Astrocyte of the cerebellum (primary cell): ENCODE measurements at regions of chr5 and their contacts with region 1.

Region 1: GRCh38 chr5:10627160-10627701 is 63.4 kb downstream of the ANKRD33B start:
- DNase-seq: no peak
- H3K4me3 ChIP-seq: peak overlapping the region; percentile 27
- CTCF ChIP-seq: no peak

Region 2: DNA sequence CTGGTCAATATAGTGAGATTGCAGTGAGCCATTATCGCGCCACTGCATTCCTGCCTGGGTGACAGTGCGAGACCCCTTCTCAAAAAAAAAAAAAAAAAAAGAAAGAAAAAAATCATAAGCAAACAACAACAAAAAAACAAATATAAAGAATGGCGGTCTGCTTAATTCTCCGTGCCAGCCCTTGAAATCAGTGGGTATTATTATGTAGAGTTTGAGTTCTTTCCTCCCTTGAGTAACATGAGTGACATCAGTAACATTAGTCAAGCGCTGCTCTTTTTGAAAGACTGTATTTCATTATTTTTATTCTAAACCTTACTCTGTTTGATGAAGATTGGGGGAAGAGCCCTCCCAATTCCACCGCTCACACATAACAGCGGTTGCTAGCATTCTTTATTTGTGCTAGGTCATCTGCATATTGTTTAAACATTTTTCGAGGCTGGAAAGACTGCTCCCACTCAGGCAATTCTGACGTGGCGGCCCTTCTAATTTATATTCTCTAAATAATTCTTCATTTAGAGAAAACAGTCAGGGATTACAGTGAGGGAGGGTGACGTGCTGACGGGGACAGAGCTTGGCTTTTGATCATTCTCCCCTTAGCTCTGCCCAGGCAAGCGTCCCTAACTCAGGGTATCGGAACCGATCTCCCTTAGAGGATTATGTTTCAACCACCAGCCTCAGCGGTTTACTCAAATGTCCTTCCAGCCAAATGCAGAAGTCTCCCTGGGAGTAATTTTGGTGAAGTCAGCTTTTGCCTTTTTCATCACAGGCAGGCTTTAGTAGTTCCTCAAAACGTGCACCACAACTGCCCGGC is 274.6 kb before region 1 on chr5:
- in situ Hi-C with region 1: no loop called
- DNase-seq: no peak
- H3K4me3 ChIP-seq: peak overlapping the region; percentile 86
- CTCF ChIP-seq: no peak

Region 3: DNA sequence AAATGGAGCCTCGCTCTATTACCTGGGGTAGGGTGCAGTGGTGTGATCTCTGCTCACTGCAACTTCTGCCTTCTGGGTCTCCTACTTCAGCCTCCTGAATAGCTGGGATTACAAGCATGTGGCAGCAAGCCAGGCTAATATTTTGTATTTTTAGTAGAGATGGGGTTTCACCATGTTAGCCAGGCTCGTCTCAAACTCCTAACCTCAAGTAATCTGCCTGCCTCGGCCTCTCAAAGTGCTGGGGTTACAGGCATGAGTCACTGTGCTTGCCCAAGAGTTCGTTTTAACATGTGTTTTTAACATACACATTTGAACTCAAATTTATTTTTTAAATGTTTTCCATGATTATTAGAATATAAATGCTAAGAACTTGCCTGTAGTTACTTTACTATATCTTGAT is 239.5 kb before region 1 on chr5:
- in situ Hi-C with region 1: loop called (anchors 10 kb)
- DNase-seq: no peak
- H3K4me3 ChIP-seq: no peak overlapping the region
- CTCF ChIP-seq: no peak

Region 4: DNA sequence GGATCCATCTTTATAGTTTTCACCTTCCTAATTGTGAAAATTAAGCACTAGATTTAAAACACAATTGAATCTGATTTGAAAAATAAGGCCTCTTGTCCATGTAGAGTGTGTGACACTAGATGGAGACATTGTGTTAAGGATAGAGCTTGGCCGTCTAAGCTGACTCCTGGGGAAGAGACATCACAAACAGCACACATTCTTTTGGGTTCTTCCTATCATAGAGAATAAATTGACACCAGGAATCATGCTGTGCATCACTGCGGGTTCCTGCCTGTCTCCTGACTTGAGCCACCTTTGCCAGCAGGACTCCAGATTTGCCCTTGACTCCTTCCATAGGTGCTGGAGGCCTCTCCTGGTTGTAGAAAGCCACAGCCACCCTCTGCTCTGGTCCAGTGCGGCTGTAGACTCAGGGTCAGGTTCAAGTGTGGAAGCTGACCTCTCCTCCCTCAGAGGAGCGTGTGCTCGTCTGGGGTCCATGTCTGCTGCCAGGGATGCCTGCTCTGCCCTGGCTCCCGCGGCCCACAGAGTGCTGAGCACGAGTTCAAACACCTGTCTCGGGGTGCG is 174.4 kb before region 1 on chr5:
- in situ Hi-C with region 1: loop called (anchors 5 kb)
- DNase-seq: peak; percentile 83
- H3K4me3 ChIP-seq: no peak overlapping the region
- CTCF ChIP-seq: peak; percentile 71

Region 5: DNA sequence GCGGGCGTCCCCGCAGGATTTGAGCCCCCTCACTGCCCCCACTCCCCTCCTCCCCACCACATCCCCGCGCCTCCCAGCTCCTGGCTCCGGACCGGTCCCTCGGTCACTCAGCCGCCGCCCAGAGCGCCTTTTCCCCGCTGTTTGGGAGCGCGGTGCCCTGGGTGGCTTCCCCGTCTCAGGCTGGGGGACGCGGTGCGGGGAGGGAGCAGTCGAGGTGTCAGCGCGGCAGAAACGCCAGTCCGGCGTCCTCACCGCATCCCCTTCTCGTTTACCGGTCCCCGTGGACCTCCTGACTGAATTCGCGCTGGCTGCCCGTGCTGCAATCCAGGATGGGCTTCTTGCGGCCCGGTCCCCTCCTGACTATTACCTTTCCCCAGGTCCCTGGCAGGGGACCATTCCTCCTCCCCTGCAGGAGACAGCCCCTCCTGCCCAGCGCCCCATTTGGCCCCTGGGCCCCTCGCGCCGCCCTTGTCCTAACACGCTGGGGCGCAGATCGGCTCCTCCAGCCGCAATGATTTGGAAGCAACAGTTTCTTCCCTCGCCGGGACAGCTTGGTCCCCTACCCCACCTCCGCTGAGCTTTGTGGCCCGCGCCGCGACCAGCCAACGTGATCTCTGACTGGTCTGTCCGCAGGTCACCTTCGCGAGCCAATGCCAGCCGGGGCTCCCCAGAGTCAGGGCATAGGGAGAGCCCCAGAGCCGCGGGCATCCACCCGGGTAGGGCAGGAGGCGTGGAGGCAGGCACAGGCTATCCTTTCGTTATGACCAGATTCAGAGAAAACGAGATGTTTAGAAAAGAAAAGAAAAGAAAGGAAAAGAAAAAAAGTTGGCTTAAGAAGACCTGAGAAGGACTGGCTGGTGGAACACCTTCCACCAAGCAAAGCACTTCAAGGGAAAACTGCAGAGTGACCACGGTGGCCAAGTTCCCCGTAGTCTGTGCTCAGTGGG is 62.1 kb before region 1 on chr5:
- in situ Hi-C with region 1: loop called (anchors 5 kb)
- DNase-seq: no peak
- H3K4me3 ChIP-seq: peak overlapping the region; percentile 81
- CTCF ChIP-seq: no peak

Region 6: DNA sequence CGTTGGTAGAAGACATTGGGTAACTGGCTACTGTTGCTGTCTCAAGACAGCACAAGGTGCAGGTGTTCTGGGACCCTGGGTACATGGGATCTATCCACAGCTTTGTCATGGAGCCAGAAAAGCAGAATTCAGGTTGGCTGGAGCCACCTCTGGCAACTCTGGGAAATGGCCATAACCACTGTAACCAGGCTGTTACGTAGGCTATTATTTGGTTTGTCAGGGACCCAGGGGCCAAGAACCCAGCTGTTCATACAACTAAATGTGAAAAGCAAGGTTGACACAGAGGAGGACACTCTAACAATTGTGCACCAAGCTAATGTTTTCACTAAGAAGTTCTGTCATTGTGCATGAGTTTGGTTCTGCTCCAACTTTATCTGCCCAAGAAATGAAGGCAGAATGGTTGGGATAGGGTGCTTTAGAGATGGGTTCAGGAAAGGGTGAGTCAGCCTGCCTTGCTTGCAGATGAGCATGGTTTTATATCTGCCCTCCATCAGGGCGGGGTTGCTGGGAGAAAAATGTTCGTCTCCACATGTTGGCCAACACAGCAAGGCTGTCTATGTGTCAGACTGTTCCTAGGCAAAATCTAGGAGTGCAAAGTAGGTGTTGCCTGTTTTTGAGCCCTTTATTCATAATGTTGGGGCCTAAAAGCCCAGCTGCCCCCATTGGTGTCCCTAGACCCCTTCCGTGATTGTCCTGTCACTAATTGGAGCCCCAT is 265.1 kb after region 1 on chr5:
- in situ Hi-C with region 1: no loop called
- DNase-seq: no peak
- H3K4me3 ChIP-seq: no peak overlapping the region
- CTCF ChIP-seq: no peak